Vagina (tissue), 2 donors: ENCODE measurements at regions of chr7 and their contacts with region 1.

Region 1: DNA sequence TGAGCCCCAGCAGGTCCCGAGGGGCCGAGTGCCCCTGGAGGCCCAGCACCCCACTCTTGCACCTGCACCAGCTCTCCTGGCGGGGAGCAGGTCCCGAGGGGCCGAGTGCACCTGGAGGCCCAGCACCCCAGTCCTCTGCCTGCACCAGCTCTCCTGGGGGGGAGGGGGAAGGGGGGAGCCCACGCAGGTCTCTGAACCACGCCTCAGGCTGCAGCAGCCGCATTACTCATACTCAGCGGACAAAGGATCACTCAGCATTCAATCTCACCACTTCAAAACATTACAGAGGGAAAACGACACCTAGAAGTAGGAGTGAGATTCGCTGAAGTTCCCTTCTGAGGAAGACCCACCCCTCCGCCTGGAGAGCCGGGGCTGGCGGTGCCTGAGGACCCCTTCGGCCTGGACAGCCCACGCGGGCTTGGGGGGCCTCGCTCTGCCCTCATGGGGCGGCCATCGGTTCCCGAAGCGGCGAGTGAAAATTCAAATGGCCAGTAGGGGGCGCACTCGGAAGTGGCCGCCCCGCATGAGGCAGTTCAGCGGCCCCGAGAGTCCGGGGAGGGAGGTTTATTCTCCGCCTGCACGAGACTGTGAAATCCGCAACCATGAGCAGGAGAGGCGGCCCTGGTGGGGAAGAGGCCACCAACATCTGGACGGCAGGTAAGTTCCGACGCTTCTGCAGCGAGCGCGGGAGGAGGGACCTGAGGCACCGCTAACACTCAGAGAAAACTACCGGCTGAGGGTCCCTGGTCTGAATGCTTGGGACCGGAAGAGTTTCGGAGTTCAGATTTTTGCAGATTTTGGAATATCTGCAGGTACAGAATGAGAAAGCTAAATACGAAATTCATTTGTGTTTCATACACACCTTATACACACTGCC is 1.1 kb upstream of the GPER1 start:
- DNase-seq: no peak
- H3K4me3 ChIP-seq: peak overlapping the region; percentile 43 to 52
- H3K27ac ChIP-seq: peak overlapping the region; percentile 68
- H3K4me1 ChIP-seq: peaks cover 41% of the 10 kb centered on the region
- H3K27me3 ChIP-seq: no peaks in the 10 kb centered on the region
- CTCF ChIP-seq: peak; percentile 68 to 96 (median 82)
- POLR2A ChIP-seq: no peak

Region 2: DNA sequence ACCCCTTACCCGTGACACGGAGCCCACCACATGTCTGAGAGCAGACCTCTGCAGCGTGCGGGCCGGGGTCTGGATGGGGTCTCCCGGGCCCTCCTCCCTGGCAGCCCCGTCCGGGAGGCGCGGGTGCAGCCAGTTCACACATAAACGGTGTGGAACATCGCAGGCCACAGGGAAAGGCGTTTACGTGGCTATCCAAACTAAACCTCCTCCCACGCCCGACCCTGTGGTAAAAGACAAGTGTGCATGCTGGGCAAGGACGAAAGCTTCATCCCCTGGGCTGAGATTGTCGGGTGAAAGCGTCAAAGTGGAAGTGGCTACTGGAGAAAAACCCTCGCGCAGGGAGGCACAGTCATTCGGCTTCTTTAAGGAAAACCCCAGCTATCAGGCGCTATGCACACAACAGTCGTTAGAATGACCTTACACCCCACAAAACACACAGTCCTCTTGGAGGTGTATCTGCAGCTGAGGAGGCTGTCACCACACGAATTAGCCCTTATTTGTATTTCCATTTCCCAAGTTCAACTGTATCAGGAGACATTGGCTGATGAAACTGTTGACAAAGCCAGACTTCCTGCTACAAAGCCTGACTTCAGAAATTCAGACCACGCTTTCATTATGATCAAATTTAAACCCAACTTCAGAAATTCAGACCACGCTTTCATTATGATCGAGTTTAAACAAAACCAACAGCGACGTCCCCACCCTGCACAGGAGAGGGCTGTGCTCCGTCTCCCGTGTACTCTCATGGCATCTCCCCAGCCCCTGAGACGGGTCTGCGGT is 16.4 kb after region 1 on chr7:
- intact Hi-C with region 1: no loop called
- DNase-seq: no peak
- H3K4me3 ChIP-seq: no peak overlapping the region
- H3K27ac ChIP-seq: no peak overlapping the region
- H3K4me1 ChIP-seq: no peaks in the 10 kb centered on the region
- H3K27me3 ChIP-seq: no peaks in the 10 kb centered on the region
- CTCF ChIP-seq: no peak
- POLR2A ChIP-seq: no peak

Region 3: DNA sequence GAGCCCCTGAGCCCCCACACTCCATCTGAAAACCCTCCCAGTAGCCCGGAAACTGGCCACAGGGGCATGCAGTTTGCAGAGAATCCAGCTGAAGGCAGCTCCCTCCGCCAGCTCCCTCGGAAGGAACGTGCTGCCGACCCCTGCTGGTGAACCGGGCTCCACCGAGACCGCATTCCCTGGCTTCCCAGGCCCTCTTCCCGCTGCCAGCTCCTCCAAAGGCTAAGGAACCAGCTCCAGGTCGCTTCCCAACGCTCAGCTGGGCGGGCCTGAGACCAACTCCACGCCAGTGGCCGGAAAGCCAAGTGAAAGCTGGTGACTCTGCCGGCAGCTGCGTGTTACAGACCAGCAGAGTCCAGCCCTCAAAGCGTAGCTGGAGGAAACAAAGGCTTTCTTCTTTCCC is 36.9 kb after region 1 on chr7:
- intact Hi-C with region 1: loop called (anchors 5 kb)
- DNase-seq: no peak
- H3K4me3 ChIP-seq: peak overlapping the region; percentile 8 to 23
- H3K27ac ChIP-seq: peak overlapping the region; percentile 67
- H3K4me1 ChIP-seq: peaks cover 25% of the 10 kb centered on the region
- H3K27me3 ChIP-seq: no peaks in the 10 kb centered on the region
- CTCF ChIP-seq: peak in 2 of 3 experiments; percentile 16 to 42
- POLR2A ChIP-seq: no peak

Region 4: DNA sequence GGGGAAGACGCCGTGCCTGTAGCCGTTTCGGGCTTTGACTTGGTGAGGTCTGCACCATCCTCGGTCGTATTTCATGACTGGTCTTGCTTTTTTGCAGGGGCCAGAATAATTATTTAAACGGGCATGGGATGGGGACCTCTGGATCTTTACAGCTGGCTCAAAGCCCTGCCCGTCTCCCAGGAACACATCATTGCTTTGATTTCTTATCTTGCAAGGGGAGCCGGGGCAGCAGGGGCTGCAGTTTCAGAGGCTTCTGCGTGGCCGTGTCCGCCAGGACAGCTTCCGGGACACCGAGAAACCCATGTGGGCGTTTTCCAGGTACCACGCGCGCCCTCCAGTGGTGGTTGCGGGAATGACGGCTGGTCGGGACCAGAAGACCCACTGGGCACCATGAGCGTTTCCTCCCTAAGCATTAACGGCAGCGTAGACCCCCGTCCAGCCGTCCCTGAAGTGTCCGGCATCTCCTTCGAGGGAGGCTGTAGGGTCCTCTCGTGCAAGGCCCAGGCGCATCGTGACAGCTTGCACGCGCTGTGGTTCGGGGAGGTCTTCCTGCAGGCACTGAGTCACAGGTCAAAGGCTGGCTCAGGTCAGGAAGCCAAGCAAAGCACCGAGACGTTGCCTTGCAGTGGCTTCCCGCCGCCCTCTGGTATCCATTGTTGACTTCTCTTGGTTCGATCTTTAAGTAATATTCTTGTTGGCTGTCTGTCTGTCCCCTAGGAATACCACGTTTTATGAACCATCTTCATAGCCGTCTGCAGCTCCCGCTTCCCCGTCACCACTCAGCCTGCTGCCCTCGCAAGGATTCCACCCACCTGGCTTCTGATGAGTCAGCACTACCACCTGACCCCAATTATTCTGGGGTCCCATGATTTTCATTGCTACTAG is 89.4 kb after region 1 on chr7:
- intact Hi-C with region 1: loop called (anchors 10 kb)
- DNase-seq: no peak
- H3K4me3 ChIP-seq: peak overlapping the region; percentile 17 to 30
- H3K27ac ChIP-seq: no peak overlapping the region
- H3K4me1 ChIP-seq: peaks cover 14% of the 10 kb centered on the region
- H3K27me3 ChIP-seq: no peaks in the 10 kb centered on the region
- CTCF ChIP-seq: peak; percentile 75 to 76 (median 76)
- POLR2A ChIP-seq: no peak